ENCODE measurements at regions of chr19 and their contacts with region 1.

Region 1: DNA sequence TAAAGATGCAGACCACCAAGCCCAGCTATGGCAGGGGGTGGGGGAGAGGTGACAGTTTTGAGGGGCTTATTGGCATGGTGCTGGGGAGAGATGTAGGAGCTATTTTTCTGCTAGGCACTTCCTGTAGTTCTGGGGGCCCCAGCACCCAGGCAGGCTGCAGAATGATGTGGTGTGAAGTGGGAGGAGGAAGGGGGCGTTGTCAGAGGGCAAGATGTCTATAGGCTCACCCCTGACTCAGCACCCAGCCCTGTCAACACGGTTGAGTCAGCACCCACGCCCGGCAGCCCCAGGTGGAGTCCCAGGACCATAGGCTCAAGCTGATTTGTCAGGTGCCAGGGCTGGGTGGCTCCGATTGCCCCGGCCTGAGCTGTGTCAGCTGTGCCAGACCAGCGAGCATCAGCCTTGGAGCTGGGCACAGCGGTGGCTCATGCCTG is 5.8 kb downstream of the KLF2 start:
- DNase-seq: peak; percentile 97
- H3K4me3 Mint-ChIP-seq: peak overlapping the region; percentile 100
- H3K27ac Mint-ChIP-seq: peak overlapping the region; percentile 100
- H3K4me1 Mint-ChIP-seq: peaks cover 51% of the 10 kb centered on the region
- H3K27me3 Mint-ChIP-seq: peaks cover 38% of the 10 kb centered on the region

Region 2: DNA sequence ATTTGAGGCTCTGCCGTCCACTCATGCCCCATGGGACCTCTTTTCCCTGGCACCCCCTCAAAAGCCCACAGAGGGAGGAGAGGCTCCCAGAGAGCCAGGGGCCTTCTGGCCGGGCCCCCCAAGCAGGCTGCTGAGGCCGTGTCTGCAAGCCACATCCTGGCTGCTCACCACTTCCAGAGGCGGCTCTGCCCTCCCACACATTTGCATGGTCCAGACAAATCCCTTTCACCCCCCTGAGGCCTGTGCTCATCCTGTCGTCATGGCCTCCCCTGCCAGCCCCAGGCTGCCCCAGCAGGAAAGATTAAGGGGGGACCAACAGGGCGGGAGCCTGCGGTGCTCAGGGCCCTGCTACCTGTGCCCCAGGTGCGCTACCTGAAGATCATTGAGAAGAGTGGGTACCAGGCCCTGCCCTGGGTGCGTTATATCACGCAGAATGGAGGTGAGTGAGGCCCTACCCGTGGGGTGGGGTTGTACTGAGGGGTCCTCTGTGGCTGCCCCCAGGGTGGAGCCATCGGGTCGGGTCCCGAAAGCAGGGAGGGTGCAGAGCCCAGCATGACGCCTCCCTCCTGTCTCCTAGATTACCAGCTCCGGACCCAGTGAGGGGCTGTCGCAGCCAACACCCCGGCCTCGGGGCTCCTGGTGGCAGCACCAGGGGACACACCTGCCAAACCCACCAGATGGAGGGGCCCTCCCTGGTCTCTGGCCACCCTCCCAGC is 96.4 kb before region 1 on chr19:
- CTCF ChIA-PET with region 1: no interaction called
- DNase-seq: no peak
- H3K4me3 Mint-ChIP-seq: no peak overlapping the region
- H3K27ac Mint-ChIP-seq: no peak overlapping the region
- H3K4me1 Mint-ChIP-seq: peaks cover 26% of the 10 kb centered on the region
- H3K27me3 Mint-ChIP-seq: no peaks in the 10 kb centered on the region

Region 3: DNA sequence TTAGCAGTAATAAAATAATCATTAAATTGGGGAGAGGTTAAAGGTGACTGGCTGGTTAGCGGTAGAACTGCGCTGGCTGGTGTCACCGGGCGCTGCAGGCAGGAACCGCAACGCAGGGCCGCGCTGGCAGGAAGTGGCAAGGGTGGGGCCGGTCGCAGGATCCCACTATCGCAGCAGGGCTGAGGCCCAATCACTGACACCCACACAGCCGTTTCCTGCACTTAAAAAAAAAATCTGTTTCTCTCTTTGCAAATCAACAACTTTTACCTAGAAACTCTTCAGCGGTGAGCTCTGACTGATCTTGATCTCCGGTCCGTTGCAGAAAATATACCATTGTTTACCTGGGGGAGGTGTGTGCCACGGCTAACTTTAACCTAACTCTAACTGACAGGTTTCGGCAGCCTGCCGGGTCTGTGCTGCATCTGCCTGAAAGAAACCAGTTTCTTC is 41.2 kb after region 1 on chr19:
- CTCF ChIA-PET with region 1: interaction called, 13 read pairs
- DNase-seq: peak; percentile 95
- H3K4me3 Mint-ChIP-seq: no peak overlapping the region
- H3K27ac Mint-ChIP-seq: no peak overlapping the region
- H3K4me1 Mint-ChIP-seq: peaks cover 7% of the 10 kb centered on the region
- H3K27me3 Mint-ChIP-seq: no peaks in the 10 kb centered on the region

Region 4: GRCh38 chr19:16376649-16377048 is 46.3 kb after region 1 on chr19:
- CTCF ChIA-PET with region 1: interaction called, 39 read pairs
- DNase-seq: peak; percentile 55
- H3K4me3 Mint-ChIP-seq: no peak overlapping the region
- H3K27ac Mint-ChIP-seq: peak overlapping the region; percentile 78
- H3K4me1 Mint-ChIP-seq: peaks cover 19% of the 10 kb centered on the region
- H3K27me3 Mint-ChIP-seq: no peaks in the 10 kb centered on the region